IMR-90 (cell line): ENCODE measurements at regions of chr2 and their contacts with region 1.

Region 1: GRCh38 chr2:148674063-148675020 is 29.8 kb downstream of the EPC2 start:
- DNase-seq: peak; percentile 77
- ATAC-seq: peak; percentile 84
- H3K4me3 ChIP-seq: no peak overlapping the region
- H3K27ac ChIP-seq: no peak overlapping the region
- H3K4me1 ChIP-seq: peaks cover 12% of the 10 kb centered on the region
- H3K27me3 ChIP-seq: no peaks in the 10 kb centered on the region
- CTCF ChIP-seq: peak; percentile 26; the same call in 1 of the 2 replicates
- POLR2A ChIP-seq: no peak
- RAD21 ChIP-seq: no peak

Region 2: GRCh38 chr2:148651972-148652371 is 22.4 kb before region 1 on chr2:
- CTCF ChIA-PET with region 1: no interaction called
- POLR2A ChIA-PET with region 1: no interaction called
- dilution Hi-C with region 1: no loop called
- in situ Hi-C with region 1: no loop called
- intact Hi-C with region 1: loop called (anchors 2 kb)
- DNase-seq: no peak
- ATAC-seq: no peak
- H3K4me3 ChIP-seq: no peak overlapping the region
- H3K27ac ChIP-seq: no peak overlapping the region
- H3K4me1 ChIP-seq: no peaks in the 10 kb centered on the region
- H3K27me3 ChIP-seq: no peaks in the 10 kb centered on the region
- CTCF ChIP-seq: no peak
- POLR2A ChIP-seq: no peak
- RAD21 ChIP-seq: no peak